ENCODE measurements at regions of chr16 and their contacts with region 1.

Region 1: DNA sequence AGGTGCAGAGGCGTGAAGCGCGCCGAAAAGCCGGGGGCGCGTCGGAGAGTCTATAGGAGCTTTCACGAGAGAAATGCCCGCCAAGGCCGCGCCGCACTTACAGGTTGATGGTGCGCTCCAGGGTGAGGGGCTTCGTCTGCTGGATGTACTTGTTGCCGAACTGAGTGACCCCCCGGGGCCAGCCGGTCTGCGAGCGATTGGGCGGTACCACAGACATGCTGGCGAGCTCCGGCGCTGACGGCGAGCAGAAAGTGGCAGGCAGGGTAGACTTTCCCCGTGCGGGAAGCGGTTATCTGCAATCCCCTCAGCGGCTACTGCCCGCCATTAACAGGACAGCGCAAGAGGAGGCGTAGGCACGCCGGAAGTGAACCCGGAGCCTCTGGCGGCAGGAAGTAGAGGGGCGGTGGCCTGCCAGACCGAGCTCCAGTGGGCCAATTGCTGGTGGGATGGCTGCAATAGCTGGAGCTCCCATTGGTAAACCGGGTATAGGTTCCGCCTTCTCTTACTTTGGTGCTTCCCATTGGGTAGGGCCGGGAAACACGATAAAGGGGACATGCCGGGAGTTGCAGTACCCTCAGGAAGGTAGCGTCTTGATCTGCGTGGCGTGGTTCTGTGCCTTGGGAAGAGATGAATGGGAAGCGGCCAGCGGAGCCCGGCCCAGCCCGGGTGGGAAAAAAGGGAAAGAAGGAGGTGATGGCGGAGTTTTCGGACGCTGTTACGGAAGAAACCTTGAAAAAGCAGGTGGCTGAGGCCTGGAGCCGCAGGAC is at the starts of genes NUDT21 and OGFOD1:
- DNase-seq: peak; percentile 96
- H3K4me3 Mint-ChIP-seq: peak within 1 kb of the TSS; percentile 93
- H3K27ac Mint-ChIP-seq: peak within 1 kb of the TSS; percentile 90
- H3K4me1 Mint-ChIP-seq: peaks cover 48% of the 10 kb centered on the region
- H3K27me3 Mint-ChIP-seq: no peaks in the 10 kb centered on the region
- total RNA-seq, gene NUDT21: 324 to 330 TPM
- total RNA-seq, gene OGFOD1: 48.5 to 50.6 TPM

Region 2: GRCh38 chr16:56257239-56257638 is 193.9 kb before region 1 on chr16:
- CTCF ChIA-PET with region 1: no interaction called
- intact Hi-C with region 1: no loop called
- DNase-seq: no peak
- H3K4me3 Mint-ChIP-seq: no peak overlapping the region
- H3K27ac Mint-ChIP-seq: no peak overlapping the region
- H3K4me1 Mint-ChIP-seq: peaks cover 4% of the 10 kb centered on the region
- H3K27me3 Mint-ChIP-seq: no peaks in the 10 kb centered on the region

Region 3: DNA sequence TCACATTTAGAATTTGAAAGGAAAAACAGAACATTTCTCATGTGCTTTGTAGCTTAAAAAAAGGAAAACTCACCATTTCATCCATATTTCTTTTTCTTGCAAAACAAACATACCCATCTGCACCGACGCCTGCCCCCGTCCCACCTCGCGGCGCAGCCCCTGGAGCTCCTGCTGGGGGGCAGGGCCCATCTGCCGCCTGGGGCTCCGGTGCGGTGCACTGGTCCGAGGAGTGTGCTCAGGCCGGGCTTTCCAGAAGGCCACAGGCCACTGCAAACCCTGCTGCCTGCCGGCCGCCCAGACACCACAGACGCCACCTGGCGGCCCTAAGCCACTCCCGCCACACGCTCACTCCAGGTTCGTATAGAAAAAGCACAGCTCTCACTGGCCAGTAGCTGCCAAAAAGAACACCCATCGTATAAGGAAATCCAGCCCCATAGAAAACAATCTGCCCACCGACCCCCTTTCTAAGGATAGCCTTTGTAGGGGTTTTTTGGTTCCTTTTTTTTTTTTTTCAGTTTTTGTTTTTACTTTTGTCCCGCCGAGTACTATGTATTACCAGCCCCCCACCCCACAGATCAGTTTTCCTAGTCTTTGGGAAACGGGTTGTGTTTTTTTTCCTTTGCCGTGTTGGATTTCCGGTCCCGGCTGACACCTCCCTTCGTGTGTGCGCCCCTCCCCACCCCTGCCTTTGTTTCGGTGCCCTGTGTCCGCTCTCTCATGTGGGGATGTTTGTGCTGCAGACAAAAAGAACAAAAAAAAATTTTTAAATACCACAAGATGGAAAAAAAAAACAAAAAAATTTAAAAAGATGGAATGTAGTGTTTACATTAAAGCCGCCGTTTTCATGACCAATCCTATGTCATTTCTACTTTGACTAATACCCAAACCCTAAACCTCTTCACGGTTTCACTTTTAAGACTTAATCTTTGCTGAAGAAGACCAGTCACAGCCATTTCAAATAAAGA is 94.6 kb before region 1 on chr16:
- CTCF ChIA-PET with region 1: no interaction called
- intact Hi-C with region 1: loop called (anchors 1 kb)
- DNase-seq: peak; percentile 68
- H3K4me3 Mint-ChIP-seq: peak overlapping the region; percentile 74
- H3K27ac Mint-ChIP-seq: peak overlapping the region; percentile 86
- H3K4me1 Mint-ChIP-seq: peaks cover 31% of the 10 kb centered on the region
- H3K27me3 Mint-ChIP-seq: no peaks in the 10 kb centered on the region

Region 4: GRCh38 chr16:56425439-56425832 is 25.7 kb before region 1 on chr16 and contains the start of gene AMFR:
- CTCF ChIA-PET with region 1: interaction called, 4 read pairs
- intact Hi-C with region 1: loop called (anchors 1 kb)
- DNase-seq: peak; percentile 53
- H3K4me3 Mint-ChIP-seq: peak within 1 kb of the TSS; percentile 88
- H3K27ac Mint-ChIP-seq: peak within 1 kb of the TSS; percentile 34
- H3K4me1 Mint-ChIP-seq: peaks cover 29% of the 10 kb centered on the region
- H3K27me3 Mint-ChIP-seq: no peaks in the 10 kb centered on the region
- total RNA-seq, gene AMFR: 26.7 to 33.0 TPM

Region 5: GRCh38 chr16:56493126-56493525 is 42.0 kb after region 1 on chr16:
- CTCF ChIA-PET with region 1: no interaction called
- intact Hi-C with region 1: no loop called
- DNase-seq: no peak
- H3K4me3 Mint-ChIP-seq: no peak overlapping the region
- H3K27ac Mint-ChIP-seq: no peak overlapping the region
- H3K4me1 Mint-ChIP-seq: no peaks in the 10 kb centered on the region
- H3K27me3 Mint-ChIP-seq: no peaks in the 10 kb centered on the region

Region 6: DNA sequence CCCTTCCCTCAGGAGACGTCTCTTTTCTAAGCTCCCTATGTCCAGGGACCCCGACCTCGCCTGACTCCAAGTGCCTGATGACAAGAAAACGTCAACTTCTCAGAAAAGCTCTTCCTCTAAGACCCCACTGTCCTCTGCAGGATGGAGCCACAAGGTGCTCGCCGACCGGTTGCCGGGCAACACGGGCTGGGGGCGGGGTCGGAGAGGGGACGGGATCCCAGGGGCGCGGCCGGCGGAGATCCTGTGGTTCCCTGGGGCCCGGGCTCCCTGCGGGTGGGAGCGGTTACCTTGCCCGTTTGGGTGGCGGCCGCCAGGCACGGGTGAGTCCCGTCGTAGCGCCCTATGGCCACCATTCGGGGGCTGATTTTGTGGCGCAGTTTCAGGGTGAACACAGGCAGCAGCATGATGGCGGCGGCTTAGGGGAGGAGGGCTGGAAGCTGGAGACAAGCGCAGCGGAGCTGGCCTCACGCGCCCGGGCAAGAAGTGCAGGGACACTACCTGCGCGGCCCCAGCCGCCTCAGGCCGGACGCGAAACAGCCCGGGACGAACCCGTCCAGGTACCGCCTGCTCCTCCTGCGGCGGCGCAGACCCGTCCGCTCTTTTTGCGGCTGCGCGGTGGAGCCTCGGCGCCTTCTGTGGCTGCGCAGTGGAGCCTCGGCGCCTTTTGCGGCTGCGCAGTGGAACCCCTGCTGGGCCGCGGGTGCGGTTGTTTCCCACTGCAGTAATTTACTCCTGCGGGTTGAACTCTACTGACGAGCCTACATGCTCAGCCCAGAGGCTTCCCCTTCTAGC is 68.5 kb after region 1 on chr16 and contains the start of gene BBS2:
- CTCF ChIA-PET with region 1: no interaction called
- intact Hi-C with region 1: loop called (anchors 1 kb)
- DNase-seq: peak; percentile 93
- H3K4me3 Mint-ChIP-seq: peak within 1 kb of the TSS; percentile 81
- H3K27ac Mint-ChIP-seq: peak within 1 kb of the TSS; percentile 84
- H3K4me1 Mint-ChIP-seq: peaks cover 39% of the 10 kb centered on the region
- H3K27me3 Mint-ChIP-seq: no peaks in the 10 kb centered on the region
- total RNA-seq, gene BBS2: 18.0 to 19.2 TPM

Region 7: GRCh38 chr16:56729735-56730662 is 278.8 kb after region 1 on chr16 and contains the start of gene NUP93:
- CTCF ChIA-PET with region 1: no interaction called
- intact Hi-C with region 1: loop called (anchors 1 kb)
- DNase-seq: peak; percentile 94
- H3K4me3 Mint-ChIP-seq: no peak within 1 kb of the TSS
- H3K27ac Mint-ChIP-seq: peak within 1 kb of the TSS; percentile 78
- H3K4me1 Mint-ChIP-seq: peaks cover 14% of the 10 kb centered on the region
- H3K27me3 Mint-ChIP-seq: no peaks in the 10 kb centered on the region
- total RNA-seq, gene NUP93: 161 to 172 TPM

Measured in activated naive CD4-positive, alpha-beta T cell treated with anti-CD3 and anti-CD28 coated beads for 36 hours (primary cell).